GM12878 (cell line): ENCODE measurements at regions of chr1 and their contacts with region 1.

Region 1: GRCh38 chr1:231364192-231364591 is 26.1 kb downstream of the SPRTN start:
- DNase-seq: no peak
- ATAC-seq: no peak
- H3K4me3 ChIP-seq: no peak overlapping the region
- H3K27ac ChIP-seq: no peak overlapping the region
- H3K4me1 ChIP-seq: no peaks in the 10 kb centered on the region
- H3K27me3 ChIP-seq: no peaks in the 10 kb centered on the region
- CTCF ChIP-seq: no peak
- EP300 ChIP-seq: no peak
- POLR2A ChIP-seq: no peak
- RAD21 ChIP-seq: no peak

Region 2: GRCh38 chr1:231584124-231584523 is 219.9 kb after region 1 on chr1:
- CTCF ChIA-PET with region 1: interaction called, 13 read pairs
- POLR2A ChIA-PET with region 1: no interaction called
- RAD21 ChIA-PET with region 1: interaction called, 6 read pairs
- SMC1A ChIA-PET with region 1: interaction called, 5 read pairs
- in situ Hi-C with region 1: loop called (anchors 5 kb)
- intact Hi-C with region 1: no loop called
- DNase-seq: no peak
- ATAC-seq: peak; percentile 55; the same call in 1 of the 3 replicates
- H3K4me3 ChIP-seq: no peak overlapping the region
- H3K27ac ChIP-seq: no peak overlapping the region
- H3K4me1 ChIP-seq: no peaks in the 10 kb centered on the region
- H3K27me3 ChIP-seq: no peaks in the 10 kb centered on the region
- CTCF ChIP-seq: peak; percentile 8 to 61 (median 16); a peak in 2 of 6 replicates
- EP300 ChIP-seq: no peak
- POLR2A ChIP-seq: no peak
- RAD21 ChIP-seq: peak; percentile 41